ENCODE measurements at regions of chr10 and their contacts with region 1.

Region 1: DNA sequence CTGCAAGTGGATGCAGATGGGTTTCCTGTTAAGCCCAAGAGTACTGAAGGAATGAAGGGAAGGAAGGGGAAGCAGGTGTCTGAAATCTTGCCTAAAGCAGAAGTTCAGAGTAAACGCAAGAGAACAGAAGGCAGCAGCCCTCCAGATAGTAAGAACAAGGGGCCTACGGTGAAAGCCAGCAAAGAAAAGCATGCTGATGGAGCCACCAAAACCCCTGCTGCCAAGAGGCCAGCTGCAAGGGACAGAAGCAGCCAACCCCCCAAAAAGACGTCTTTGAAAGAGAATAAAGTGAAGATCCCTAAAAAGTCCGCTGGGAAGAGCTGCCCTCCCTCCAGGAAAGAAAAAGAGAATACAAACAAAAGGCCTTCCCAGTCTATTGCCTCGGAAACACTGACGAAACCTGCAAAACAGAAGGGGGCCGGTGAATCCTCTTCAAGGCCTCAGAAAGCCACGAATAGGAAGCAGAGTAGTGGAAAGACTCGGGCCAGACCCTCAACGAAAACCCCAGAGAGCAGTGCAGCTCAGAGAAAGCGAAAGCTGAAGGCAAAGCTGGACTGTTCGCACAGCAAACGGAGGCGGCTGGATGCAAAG is 152.5 kb downstream of the LCOR start:
- DNase-seq: no peak
- H3K4me3 ChIP-seq: no peak overlapping the region
- H3K27ac ChIP-seq: no peak overlapping the region
- H3K4me1 ChIP-seq: peaks cover 3% of the 10 kb centered on the region
- H3K27me3 ChIP-seq: no peaks in the 10 kb centered on the region
- CTCF ChIP-seq: no peak

Region 2: GRCh38 chr10:96995851-96996250 is 11.2 kb after region 1 on chr10:
- CTCF ChIA-PET with region 1: no interaction called
- dilution Hi-C with region 1: no loop called
- in situ Hi-C with region 1: no loop called
- intact Hi-C with region 1: loop called (anchors 1 kb)
- DNase-seq: peak; percentile 9
- H3K4me3 ChIP-seq: no peak overlapping the region
- H3K27ac ChIP-seq: no peak overlapping the region
- H3K4me1 ChIP-seq: peaks cover 5% of the 10 kb centered on the region
- H3K27me3 ChIP-seq: no peaks in the 10 kb centered on the region
- CTCF ChIP-seq: no peak